ENCODE measurements at regions of chr12 and their contacts with region 1.

Region 1: DNA sequence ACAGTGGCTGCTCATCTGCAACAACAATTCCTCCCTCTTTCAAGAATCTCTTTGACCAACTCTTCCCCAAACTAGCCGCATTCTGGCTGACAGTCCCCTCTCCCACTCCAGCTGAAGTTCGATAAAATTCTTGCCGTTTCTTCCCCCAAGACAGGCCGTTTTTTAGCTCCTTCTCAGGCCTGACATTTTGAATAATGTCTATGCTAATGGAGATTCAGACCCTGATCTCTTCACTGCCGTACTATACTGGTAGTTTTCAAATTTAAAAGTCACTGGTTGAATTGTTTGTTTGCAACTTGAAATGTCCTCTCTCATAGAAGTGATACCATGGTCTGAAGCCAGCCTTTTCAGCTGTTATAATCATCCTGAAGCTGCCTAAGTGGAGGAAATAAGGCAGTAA is 65.9 kb upstream of the AMN1 start:
- DNase-seq: no peak
- ATAC-seq: no peak
- H3K4me3 ChIP-seq: no peak overlapping the region
- H3K4me3 Mint-ChIP-seq: no peak overlapping the region
- H3K27ac ChIP-seq: no peak overlapping the region
- H3K27ac Mint-ChIP-seq: no peak overlapping the region
- H3K4me1 ChIP-seq: peaks cover 0 to 8% of the 10 kb centered on the region in 2 donors
- H3K4me1 Mint-ChIP-seq: peaks cover 36% of the 10 kb centered on the region
- H3K27me3 ChIP-seq: no peaks in the 10 kb centered on the region
- H3K27me3 Mint-ChIP-seq: no peaks in the 10 kb centered on the region
- CTCF ChIP-seq: no peak

Region 2: DNA sequence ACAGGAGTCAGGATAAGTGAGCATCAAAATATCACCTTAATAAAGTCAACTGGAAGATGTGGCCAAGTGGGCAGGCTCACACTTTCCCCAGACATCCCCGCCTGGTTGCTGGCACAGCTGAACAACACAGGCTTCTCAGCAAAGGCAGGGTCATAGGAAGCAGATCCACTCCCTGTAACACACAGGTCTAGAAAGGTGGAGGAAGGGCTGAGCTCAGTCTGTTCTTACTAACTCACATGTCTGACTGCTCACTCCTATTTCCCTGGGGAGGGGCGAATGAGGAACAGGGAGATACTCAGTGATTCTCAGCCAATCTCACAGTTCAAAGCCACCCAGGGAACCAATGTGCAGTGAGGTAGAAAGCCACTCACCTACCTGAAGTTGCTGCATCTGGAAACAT is 20.9 kb before region 1 on chr12:
- CTCF ChIA-PET with region 1: interaction called, 5 read pairs
- POLR2A ChIA-PET with region 1: interaction called, 13 read pairs
- intact Hi-C with region 1: no loop called
- DNase-seq: peak; percentile 50
- ATAC-seq: peak; percentile 78
- H3K4me3 ChIP-seq: no peak overlapping the region
- H3K4me3 Mint-ChIP-seq: no peak overlapping the region
- H3K27ac ChIP-seq: no peak overlapping the region
- H3K27ac Mint-ChIP-seq: peak overlapping the region; percentile 72
- H3K4me1 ChIP-seq: peaks cover 16% of the 10 kb centered on the region in 2 donors
- H3K4me1 Mint-ChIP-seq: peaks cover 23% of the 10 kb centered on the region
- H3K27me3 ChIP-seq: no peaks in the 10 kb centered on the region
- H3K27me3 Mint-ChIP-seq: no peaks in the 10 kb centered on the region
- CTCF ChIP-seq: no peak

Region 3: DNA sequence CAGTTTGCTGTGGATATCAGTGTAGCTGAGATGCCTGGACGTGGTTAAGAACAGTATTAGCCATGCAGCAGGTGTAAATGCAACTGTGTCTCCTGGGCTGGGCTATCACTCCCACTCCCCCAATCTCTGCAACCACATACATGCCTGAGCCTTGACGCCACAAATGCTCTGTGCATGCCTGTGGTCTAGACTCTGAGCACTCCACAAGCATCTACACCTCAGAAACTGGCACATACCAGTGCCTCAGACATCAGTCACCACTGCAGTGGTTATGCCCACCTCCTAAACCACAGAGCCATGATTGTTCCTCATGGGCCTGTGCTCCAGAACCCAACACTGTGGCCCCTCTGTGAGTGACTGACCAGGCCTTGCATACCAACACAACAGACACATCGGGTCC is 2000.8 kb after region 1 on chr12:
- CTCF ChIA-PET with region 1: no interaction called
- POLR2A ChIA-PET with region 1: no interaction called
- intact Hi-C with region 1: no loop called
- DNase-seq: no peak
- ATAC-seq: no peak
- H3K4me3 ChIP-seq: no peak overlapping the region
- H3K4me3 Mint-ChIP-seq: no peak overlapping the region
- H3K27ac ChIP-seq: no peak overlapping the region
- H3K27ac Mint-ChIP-seq: no peak overlapping the region
- H3K4me1 ChIP-seq: no peaks in the 10 kb centered on the region
- H3K4me1 Mint-ChIP-seq: no peaks in the 10 kb centered on the region
- H3K27me3 ChIP-seq: no peaks in the 10 kb centered on the region
- H3K27me3 Mint-ChIP-seq: no peaks in the 10 kb centered on the region
- CTCF ChIP-seq: no peak